ENCODE measurements at regions of chr5 and their contacts with region 1.

Region 1: GRCh38 chr5:2751592-2752021 is at the start of gene IRX2:
- DNase-seq: peak; percentile 38
- H3K4me3 Mint-ChIP-seq: peak within 1 kb of the TSS; percentile 15
- H3K27ac Mint-ChIP-seq: peak within 1 kb of the TSS; percentile 67
- H3K4me1 Mint-ChIP-seq: peaks cover 3% of the 10 kb centered on the region
- H3K27me3 Mint-ChIP-seq: peaks cover 54% of the 10 kb centered on the region
- total RNA-seq, gene IRX2: not detected in 2 replicates

Region 2: GRCh38 chr5:1883120-1883924 is 868.3 kb before region 1 on chr5:
- intact Hi-C with region 1: loop called (anchors 5 kb)
- DNase-seq: no peak
- H3K4me3 Mint-ChIP-seq: no peak overlapping the region
- H3K27ac Mint-ChIP-seq: peak overlapping the region; percentile 41
- H3K4me1 Mint-ChIP-seq: peaks cover 4% of the 10 kb centered on the region
- H3K27me3 Mint-ChIP-seq: peaks cover 48% of the 10 kb centered on the region

Region 3: DNA sequence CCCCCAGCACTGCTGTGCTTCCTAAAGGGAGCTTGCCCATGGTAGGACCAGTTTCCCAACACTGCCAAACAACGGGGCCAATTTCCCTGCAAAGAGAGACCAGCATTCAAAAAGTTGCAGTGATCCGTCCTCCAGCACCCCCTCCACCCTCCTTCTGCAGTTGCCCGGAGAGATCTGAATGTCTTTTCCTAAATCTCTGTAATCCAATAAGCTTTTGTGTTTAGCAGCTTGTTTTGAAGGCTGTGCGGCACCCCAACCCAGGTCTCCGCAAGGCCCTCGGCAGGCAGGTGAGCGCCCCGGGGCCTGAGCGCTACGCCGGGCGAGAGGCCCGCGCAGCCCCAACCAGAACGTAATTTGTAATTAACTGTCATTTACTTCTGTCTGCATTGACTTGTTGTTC is 366.7 kb after region 1 on chr5:
- intact Hi-C with region 1: loop called (anchors 5 kb)
- DNase-seq: no peak
- H3K4me3 Mint-ChIP-seq: no peak overlapping the region
- H3K27ac Mint-ChIP-seq: no peak overlapping the region
- H3K4me1 Mint-ChIP-seq: no peaks in the 10 kb centered on the region
- H3K27me3 Mint-ChIP-seq: peaks cover 27% of the 10 kb centered on the region

Region 4: DNA sequence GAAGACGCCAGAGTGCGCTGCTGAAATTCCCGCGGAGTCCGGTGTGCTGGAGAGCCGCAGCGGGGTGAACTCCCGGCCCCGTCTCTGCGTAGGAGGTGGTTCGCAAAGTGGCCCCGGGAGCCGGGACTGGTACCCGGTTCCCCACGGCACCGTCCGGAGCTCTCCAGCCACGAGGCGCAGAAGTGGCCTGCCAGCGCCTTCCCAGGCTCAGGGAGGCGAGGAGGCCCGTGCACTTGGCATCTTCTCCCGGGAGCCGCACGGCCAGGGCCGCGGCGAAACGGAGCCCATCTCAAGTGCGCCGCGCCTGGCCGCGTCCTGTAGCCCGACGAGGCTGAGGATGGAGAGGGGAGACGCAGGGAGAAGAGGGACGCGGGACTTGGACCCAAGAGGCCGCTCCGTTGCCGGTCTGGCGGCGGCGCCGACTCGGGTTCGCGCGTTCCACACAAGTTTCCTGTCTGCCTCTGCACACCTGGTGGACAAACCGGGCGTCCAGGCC is 843.0 kb after region 1 on chr5:
- intact Hi-C with region 1: loop called (anchors 5 kb)
- DNase-seq: peak; percentile 54
- H3K4me3 Mint-ChIP-seq: no peak overlapping the region
- H3K27ac Mint-ChIP-seq: no peak overlapping the region
- H3K4me1 Mint-ChIP-seq: peaks cover 4% of the 10 kb centered on the region
- H3K27me3 Mint-ChIP-seq: peaks cover 61% of the 10 kb centered on the region